CD4-positive, alpha-beta T cell (primary cell): ENCODE measurements at regions of chr7 and their contacts with region 1.

Region 1: DNA sequence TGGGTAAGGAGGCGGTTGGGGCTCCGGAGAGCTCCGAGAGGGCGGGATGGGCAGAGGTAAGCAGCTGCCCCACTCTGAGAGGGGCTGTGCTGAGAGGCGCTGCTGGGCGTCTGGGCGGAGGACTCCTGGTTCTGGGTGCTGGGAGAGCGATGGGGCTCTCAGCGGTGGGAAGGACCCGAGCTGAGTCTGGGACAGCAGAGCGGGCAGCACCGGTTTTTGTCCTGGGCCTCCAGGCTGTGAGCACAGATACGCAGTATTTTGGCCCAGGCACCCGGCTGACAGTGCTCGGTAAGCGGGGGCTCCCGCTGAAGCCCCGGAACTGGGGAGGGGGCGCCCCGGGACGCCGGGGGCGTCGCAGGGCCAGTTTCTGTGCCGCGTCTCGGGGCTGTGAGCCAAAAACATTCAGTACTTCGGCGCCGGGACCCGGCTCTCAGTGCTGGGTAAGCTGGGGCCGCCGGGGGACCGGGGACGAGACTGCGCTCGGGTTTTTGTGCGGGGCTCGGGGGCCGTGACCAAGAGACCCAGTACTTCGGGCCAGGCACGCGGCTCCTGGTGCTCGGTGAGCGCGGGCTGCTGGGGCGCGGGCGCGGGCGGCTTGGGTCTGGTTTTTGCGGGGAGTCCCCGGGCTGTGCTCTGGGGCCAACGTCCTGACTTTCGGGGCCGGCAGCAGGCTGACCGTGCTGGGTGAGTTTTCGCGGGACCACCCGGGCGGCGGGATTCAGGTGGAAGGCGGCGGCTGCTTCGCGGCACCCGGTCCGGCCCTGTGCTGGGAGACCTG is 26.0 kb downstream of the PRSS2 start:
- DNase-seq: peak in 6 of 14 experiments; percentile 15 to 68 (median 54)
- ATAC-seq: peak; percentile 5
- H3K4me3 ChIP-seq: peak overlapping the region; percentile 100
- H3K4me3 Mint-ChIP-seq: peak overlapping the region; percentile 97
- H3K27ac ChIP-seq: peak overlapping the region; percentile 95 to 99
- H3K27ac Mint-ChIP-seq: peak overlapping the region; percentile 98
- H3K4me1 ChIP-seq: peaks cover 67% of the 10 kb centered on the region
- H3K4me1 Mint-ChIP-seq: peaks cover 77% of the 10 kb centered on the region
- H3K27me3 ChIP-seq: no peaks in the 10 kb centered on the region
- H3K27me3 Mint-ChIP-seq: no peaks in the 10 kb centered on the region
- CTCF ChIP-seq: no peak

Region 2: DNA sequence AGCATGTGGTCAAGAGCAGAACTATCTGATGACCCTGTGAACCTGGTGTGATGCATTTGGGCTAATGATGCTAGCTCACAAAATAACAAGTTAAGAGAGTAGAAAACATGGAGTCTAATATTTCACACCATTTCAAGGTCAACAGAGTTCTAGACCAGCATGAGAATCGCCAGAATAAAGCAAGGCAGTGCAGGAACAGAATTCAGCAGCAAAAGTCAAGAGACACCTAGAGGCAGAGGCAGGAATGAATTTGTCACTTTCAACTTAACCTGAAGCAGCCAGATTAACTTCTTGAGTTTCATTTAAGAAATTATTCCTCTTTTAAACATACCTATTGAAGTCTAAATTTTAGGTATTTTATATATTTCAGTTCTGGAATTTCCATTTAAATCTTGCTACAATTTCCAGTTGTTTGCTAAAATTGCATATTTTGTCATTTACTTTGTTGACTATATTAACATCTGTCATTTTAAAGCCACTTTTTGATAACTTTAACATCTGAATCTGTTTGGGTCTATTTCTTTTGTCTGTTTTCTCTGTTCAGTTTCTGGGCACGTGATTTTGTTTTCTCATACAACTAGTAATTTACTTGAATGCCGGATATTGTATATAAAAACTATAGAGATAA is 494.8 kb before region 1 on chr7:
- CTCF ChIA-PET with region 1: interaction called, 3 read pairs
- POLR2A ChIA-PET with region 1: interaction called, 47 read pairs
- intact Hi-C with region 1: no loop called
- DNase-seq: peak in 3 of 14 experiments; percentile 29 to 38 (median 33)
- ATAC-seq: no peak
- H3K4me3 ChIP-seq: no peak overlapping the region
- H3K4me3 Mint-ChIP-seq: no peak overlapping the region
- H3K27ac ChIP-seq: no peak overlapping the region
- H3K27ac Mint-ChIP-seq: no peak overlapping the region
- H3K4me1 ChIP-seq: peaks cover 12% of the 10 kb centered on the region
- H3K4me1 Mint-ChIP-seq: peaks cover 40% of the 10 kb centered on the region
- H3K27me3 ChIP-seq: no peaks in the 10 kb centered on the region
- H3K27me3 Mint-ChIP-seq: peaks cover 24% of the 10 kb centered on the region
- CTCF ChIP-seq: peak; percentile 16

Region 3: DNA sequence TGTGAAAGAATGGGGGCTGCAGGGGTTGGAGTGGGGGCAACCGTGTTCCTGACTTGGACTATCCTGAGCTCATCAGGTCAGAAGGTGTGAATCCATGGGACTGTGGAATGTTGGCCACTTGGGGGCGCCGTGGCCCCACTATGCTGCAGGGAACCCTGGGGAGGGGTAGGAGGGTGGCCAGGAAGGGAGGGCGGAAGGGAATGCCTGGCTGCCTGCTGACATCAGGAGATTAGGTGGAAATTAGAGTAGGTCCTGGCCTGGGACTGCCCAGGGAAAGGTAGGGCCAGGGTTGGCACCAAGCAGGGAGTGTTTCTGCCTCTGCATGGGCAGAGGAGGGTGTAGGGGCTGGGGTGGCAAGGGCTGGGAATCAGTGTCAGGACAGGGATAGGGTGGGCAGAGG is 473.1 kb before region 1 on chr7:
- CTCF ChIA-PET with region 1: no interaction called
- POLR2A ChIA-PET with region 1: interaction called, 78 read pairs
- intact Hi-C with region 1: loop called in 1 of 2 experiments (anchors 5 kb)
- DNase-seq: peak in 8 of 14 experiments; percentile 34 to 72 (median 54)
- ATAC-seq: peak; percentile 38
- H3K4me3 ChIP-seq: no peak overlapping the region
- H3K4me3 Mint-ChIP-seq: no peak overlapping the region
- H3K27ac ChIP-seq: peak overlapping the region in 1 of 2 donors; percentile 17
- H3K27ac Mint-ChIP-seq: peak overlapping the region; percentile 83
- H3K4me1 ChIP-seq: peaks cover 24% of the 10 kb centered on the region
- H3K4me1 Mint-ChIP-seq: peaks cover 38% of the 10 kb centered on the region
- H3K27me3 ChIP-seq: no peaks in the 10 kb centered on the region
- H3K27me3 Mint-ChIP-seq: peaks cover 16% of the 10 kb centered on the region
- CTCF ChIP-seq: peak; percentile 45

Region 4: DNA sequence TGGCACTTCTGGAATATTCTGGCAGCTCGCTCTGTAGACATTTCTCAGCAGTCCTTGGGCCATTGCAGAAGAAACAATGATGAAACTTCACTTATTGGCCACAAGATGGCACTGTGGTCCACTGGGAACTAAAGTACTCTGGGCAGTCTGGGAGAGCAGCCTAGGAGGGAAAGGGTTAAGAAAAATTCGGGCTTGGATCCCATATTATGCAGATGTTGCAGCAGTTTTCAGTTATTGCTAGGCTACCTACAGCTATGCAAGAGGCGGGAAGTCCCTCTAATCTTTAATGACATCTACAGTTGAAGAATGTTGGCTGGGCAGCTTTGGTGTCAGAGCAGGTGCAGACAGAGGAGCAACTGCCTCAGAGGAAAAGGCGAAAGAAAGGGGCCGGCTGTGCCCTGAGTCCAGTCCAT is 337.2 kb before region 1 on chr7:
- CTCF ChIA-PET with region 1: no interaction called
- POLR2A ChIA-PET with region 1: interaction called, 12 read pairs
- intact Hi-C with region 1: no loop called
- DNase-seq: peak in 4 of 14 experiments; percentile 49 to 77 (median 60)
- ATAC-seq: peak; percentile 56
- H3K4me3 ChIP-seq: no peak overlapping the region
- H3K4me3 Mint-ChIP-seq: peak overlapping the region; percentile 2
- H3K27ac ChIP-seq: no peak overlapping the region
- H3K27ac Mint-ChIP-seq: peak overlapping the region; percentile 67
- H3K4me1 ChIP-seq: peaks cover 54% of the 10 kb centered on the region
- H3K4me1 Mint-ChIP-seq: peaks cover 87% of the 10 kb centered on the region
- H3K27me3 ChIP-seq: no peaks in the 10 kb centered on the region
- H3K27me3 Mint-ChIP-seq: no peaks in the 10 kb centered on the region
- CTCF ChIP-seq: peak; percentile 74

Region 5: GRCh38 chr7:142611566-142612236 is 185.1 kb before region 1 on chr7:
- CTCF ChIA-PET with region 1: interaction called, 4 read pairs
- POLR2A ChIA-PET with region 1: interaction called, 38 read pairs
- intact Hi-C with region 1: no loop called
- DNase-seq: peak in 2 of 14 experiments; percentile 11 to 17
- ATAC-seq: no peak
- H3K4me3 ChIP-seq: no peak overlapping the region
- H3K4me3 Mint-ChIP-seq: no peak overlapping the region
- H3K27ac ChIP-seq: no peak overlapping the region
- H3K27ac Mint-ChIP-seq: peak overlapping the region; percentile 59
- H3K4me1 ChIP-seq: peaks cover 4% of the 10 kb centered on the region
- H3K4me1 Mint-ChIP-seq: peaks cover 17% of the 10 kb centered on the region
- H3K27me3 ChIP-seq: no peaks in the 10 kb centered on the region
- H3K27me3 Mint-ChIP-seq: no peaks in the 10 kb centered on the region
- CTCF ChIP-seq: no peak

Region 6: GRCh38 chr7:142632291-142633134 is 164.3 kb before region 1 on chr7:
- CTCF ChIA-PET with region 1: no interaction called
- POLR2A ChIA-PET with region 1: interaction called, 71 read pairs
- intact Hi-C with region 1: no loop called
- DNase-seq: peak; percentile 22 to 83 (median 44)
- ATAC-seq: peak; percentile 42
- H3K4me3 ChIP-seq: no peak overlapping the region
- H3K4me3 Mint-ChIP-seq: no peak overlapping the region
- H3K27ac ChIP-seq: no peak overlapping the region
- H3K27ac Mint-ChIP-seq: peak overlapping the region; percentile 54
- H3K4me1 ChIP-seq: peaks cover 8% of the 10 kb centered on the region
- H3K4me1 Mint-ChIP-seq: peaks cover 15% of the 10 kb centered on the region
- H3K27me3 ChIP-seq: no peaks in the 10 kb centered on the region
- H3K27me3 Mint-ChIP-seq: no peaks in the 10 kb centered on the region
- CTCF ChIP-seq: peak; percentile 58

Region 7: DNA sequence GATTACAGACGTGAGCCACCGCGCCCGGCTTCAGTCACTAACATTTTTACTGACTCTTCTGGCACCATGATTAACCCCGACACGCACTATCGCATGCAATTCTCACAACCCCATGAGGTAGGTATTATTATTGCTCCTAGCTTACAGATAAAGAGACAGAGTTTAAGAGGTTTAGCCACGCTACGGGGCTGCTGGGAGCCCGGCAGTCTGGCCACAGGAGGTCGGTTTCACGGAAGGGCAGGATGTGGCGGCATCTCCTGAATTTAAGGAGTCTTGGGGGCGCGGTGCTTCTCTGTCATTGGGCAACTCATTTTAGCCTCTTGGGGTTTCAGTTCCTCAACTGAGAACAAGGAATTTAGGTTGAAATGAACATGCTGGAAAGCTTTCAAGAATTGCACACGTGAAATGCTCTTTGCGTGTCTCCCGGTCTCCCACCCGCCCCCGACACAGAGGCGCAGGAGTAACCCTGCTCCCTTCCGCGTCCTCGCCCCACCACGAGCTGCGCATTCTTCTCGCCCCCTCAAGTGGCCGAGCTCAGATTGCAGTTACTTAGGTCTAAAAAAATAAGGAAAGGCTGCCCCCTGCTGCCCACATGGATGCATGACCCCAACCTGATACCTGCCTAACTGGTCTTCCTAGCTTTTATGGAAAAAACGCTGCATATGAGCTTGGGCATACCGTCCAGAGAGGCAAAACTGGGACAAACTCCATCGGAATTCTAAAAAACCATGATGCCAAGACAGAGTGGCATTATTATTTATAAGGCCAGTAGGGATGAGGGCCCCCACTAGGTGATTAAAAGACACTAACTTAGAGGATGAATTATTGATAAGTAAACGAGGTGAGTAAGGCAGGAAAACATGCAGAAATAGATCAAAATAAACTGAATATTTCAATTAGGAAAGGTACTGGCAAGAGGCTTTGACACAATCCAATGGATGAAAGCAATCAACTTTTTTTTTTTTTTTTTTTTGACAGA is 13.6 kb before region 1 on chr7:
- CTCF ChIA-PET with region 1: interaction called, 4 read pairs
- POLR2A ChIA-PET with region 1: interaction called, 5,733 read pairs
- intact Hi-C with region 1: loop called (anchors 1 kb)
- DNase-seq: peak; percentile 62 to 90 (median 74)
- ATAC-seq: peak; percentile 43
- H3K4me3 ChIP-seq: peak overlapping the region; percentile 54
- H3K4me3 Mint-ChIP-seq: peak overlapping the region; percentile 91
- H3K27ac ChIP-seq: no peak overlapping the region
- H3K27ac Mint-ChIP-seq: peak overlapping the region; percentile 98
- H3K4me1 ChIP-seq: peaks cover 13% of the 10 kb centered on the region
- H3K4me1 Mint-ChIP-seq: peaks cover 22% of the 10 kb centered on the region
- H3K27me3 ChIP-seq: no peaks in the 10 kb centered on the region
- H3K27me3 Mint-ChIP-seq: no peaks in the 10 kb centered on the region
- CTCF ChIP-seq: peak; percentile 74

Region 8: GRCh38 chr7:142916508-142916907 is 119.7 kb after region 1 on chr7:
- CTCF ChIA-PET with region 1: no interaction called
- POLR2A ChIA-PET with region 1: no interaction called
- intact Hi-C with region 1: no loop called
- DNase-seq: no peak
- ATAC-seq: no peak
- H3K4me3 ChIP-seq: no peak overlapping the region
- H3K4me3 Mint-ChIP-seq: no peak overlapping the region
- H3K27ac ChIP-seq: no peak overlapping the region
- H3K27ac Mint-ChIP-seq: no peak overlapping the region
- H3K4me1 ChIP-seq: no peaks in the 10 kb centered on the region
- H3K4me1 Mint-ChIP-seq: no peaks in the 10 kb centered on the region
- H3K27me3 ChIP-seq: peaks cover 0 to 3% of the 10 kb centered on the region in 2 experiments
- H3K27me3 Mint-ChIP-seq: peaks cover 19% of the 10 kb centered on the region
- CTCF ChIP-seq: no peak